ENCODE measurements at regions of chr12 and their contacts with region 1.

Region 1: DNA sequence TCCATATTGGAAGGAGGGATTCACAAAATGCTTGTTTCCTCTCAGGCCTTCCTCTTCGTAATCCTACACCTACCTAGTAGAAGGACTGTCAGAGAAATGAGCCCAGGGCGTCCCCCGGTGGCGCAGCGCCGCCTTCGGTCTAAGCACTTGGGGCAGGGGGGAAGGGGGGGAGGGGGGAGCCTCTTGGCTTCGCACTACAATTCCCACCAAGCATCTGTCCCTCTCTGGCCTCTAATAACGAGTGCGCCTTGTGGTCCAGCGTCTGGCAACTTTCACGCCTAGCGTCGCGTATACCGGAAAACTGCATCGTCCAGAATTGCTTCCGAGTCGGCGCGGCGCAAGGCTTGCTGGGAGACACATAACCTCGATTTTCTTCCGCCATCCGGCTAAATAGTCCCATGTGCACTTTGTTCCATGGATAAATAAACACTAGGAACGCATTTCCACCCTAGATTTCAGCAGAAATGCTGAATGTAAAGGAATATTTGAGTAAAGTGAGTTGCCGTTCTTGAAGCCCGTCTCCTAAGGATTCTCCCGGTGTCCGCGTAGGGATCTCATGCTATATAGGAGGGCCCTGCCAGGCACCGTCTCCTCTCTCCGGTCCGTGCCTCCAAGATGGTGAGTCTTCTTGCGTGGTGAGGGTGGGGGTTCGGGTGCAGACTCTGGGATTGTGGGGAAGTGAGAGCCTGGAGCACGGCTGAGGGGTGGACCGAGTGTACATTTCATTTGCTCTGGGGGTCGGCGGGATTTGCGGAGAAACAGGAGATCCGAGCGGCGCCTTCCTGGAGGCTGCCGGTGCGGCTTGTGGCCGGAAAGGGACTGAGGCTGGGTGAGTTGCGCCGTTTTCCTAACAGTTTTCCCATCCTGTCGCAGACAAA is at the start of gene RPS26:
- DNase-seq: peak; percentile 97
- H3K4me3 Mint-ChIP-seq: peak within 1 kb of the TSS; percentile 100
- H3K27ac Mint-ChIP-seq: peak within 1 kb of the TSS; percentile 99
- H3K4me1 Mint-ChIP-seq: peaks cover 50% of the 10 kb centered on the region
- H3K27me3 Mint-ChIP-seq: no peaks in the 10 kb centered on the region
- total RNA-seq, gene RPS26: 40.5 and 46.3 TPM in 2 replicates

Region 2: DNA sequence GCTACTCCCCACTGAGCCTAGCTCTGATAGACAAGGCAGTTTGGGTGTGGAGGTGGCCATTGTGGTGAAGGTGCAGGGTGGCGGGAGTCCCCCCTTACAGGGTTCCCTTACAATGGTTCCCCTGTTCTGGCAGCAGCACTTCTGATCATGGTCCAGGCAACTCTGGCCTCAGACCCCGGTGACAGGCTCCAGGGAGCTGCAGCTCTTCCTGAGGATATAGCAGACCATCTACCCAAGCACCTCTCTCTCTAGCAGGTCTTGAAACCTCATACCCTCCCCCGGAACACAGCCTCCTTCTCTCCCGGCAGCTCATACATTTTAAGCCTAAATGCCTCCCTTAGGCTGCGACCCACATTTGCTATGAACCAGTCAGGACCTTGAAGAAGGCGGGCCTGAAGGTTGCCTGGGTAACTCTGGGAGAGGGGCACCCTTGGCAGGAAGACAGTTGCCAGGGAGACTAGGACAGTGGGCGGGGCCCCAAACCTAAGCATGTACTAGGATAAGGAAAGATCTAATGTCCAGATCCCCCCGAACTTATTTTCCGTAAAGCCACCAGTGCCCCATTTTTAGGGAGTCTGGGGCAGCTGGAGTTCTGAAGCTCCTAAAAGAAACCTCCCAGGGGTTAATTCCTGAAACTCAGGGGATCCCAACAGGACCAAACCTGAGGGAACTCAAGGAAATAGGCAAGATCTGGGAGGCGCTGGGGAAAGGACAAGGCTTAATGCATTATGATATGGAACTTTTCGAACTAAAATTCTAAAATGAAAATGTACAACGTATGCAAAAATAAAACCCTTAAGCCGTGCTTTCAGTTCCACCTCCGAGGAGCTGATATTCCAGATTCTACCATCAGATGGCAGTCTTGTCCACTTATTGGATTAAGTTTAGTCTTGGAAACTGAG is 303.4 kb before region 1 on chr12:
- intact Hi-C with region 1: loop called (anchors 2 kb)
- DNase-seq: peak; percentile 96
- H3K4me3 Mint-ChIP-seq: peak overlapping the region; percentile 88
- H3K27ac Mint-ChIP-seq: peak overlapping the region; percentile 85
- H3K4me1 Mint-ChIP-seq: peaks cover 31% of the 10 kb centered on the region
- H3K27me3 Mint-ChIP-seq: peaks cover 4% of the 10 kb centered on the region

Region 3: DNA sequence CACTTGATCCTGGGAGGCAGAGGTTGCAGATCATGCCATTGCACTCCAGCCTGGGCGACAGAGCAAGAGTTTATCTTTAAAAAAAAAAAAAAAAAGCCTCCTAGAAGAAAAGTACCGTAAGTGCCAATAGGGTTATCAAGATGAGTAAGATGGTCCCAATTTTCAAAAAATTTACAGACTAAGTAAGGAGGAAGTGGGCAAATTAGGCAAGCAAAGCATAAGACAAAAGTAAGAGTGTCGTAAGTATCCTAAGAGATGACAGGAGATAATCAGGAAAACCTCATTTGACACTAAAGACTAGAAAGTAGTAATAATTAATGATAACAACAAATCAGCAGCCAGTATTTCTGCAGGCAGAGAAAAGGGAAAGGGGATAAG is 126.3 kb before region 1 on chr12:
- intact Hi-C with region 1: no loop called
- DNase-seq: no peak
- H3K4me3 Mint-ChIP-seq: peak overlapping the region; percentile 0
- H3K27ac Mint-ChIP-seq: peak overlapping the region; percentile 6
- H3K4me1 Mint-ChIP-seq: peaks cover 19% of the 10 kb centered on the region
- H3K27me3 Mint-ChIP-seq: no peaks in the 10 kb centered on the region

Region 4: GRCh38 chr12:55973598-55974307 is 68.0 kb before region 1 on chr12 and contains the start of gene RAB5B:
- intact Hi-C with region 1: loop called (anchors 1 kb)
- DNase-seq: peak; percentile 99
- H3K4me3 Mint-ChIP-seq: no peak within 1 kb of the TSS
- H3K27ac Mint-ChIP-seq: no peak within 1 kb of the TSS
- H3K4me1 Mint-ChIP-seq: peaks cover 28% of the 10 kb centered on the region
- H3K27me3 Mint-ChIP-seq: no peaks in the 10 kb centered on the region
- total RNA-seq, gene RAB5B: 39.0 and 40.2 TPM in 2 replicates

Region 5: GRCh38 chr12:56020423-56021184 is 21.2 kb before region 1 on chr12 and contains the start of gene IKZF4:
- intact Hi-C with region 1: loop called (anchors 2 kb)
- DNase-seq: peak; percentile 77
- H3K4me3 Mint-ChIP-seq: peak within 1 kb of the TSS; percentile 100
- H3K27ac Mint-ChIP-seq: peak within 1 kb of the TSS; percentile 99
- H3K4me1 Mint-ChIP-seq: peaks cover 47% of the 10 kb centered on the region
- H3K27me3 Mint-ChIP-seq: no peaks in the 10 kb centered on the region
- total RNA-seq, gene IKZF4: 24.3 and 26.1 TPM in 2 replicates

Region 6: DNA sequence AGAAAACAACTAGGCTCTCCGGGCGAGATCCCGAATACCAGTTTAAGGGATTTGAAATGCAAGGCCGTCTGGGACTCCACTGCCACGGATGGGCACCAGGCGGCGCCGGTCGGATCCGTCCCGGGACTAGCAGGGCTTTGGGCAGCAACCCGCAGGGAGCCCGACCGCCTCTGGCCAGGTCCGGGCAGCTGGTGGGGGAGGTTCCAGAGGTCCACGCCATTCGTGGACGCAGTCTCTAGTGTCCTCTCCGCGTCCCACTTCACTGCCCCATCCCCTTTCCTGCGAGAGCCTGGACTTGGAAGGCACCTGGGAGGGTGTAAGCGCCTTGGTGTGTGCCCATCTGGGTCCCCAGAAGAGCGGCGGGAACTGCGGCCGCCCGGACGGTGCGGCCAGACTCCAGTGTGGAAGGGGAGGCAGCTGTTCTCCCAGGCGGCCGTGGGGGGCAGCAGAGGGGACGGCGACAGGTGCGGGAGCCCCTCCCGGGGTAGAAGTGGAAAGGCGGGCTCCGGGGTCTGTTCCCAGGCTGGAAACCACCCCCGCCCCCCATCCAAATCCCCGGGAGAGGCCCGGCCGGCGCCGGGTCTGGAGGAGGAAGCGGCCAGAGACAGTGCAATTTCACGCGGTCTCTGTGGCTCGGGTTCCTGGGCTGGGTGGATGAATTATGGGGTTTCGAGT is 37.3 kb after region 1 on chr12:
- intact Hi-C with region 1: loop called (anchors 5 kb)
- DNase-seq: peak; percentile 85
- H3K4me3 Mint-ChIP-seq: peak overlapping the region; percentile 88
- H3K27ac Mint-ChIP-seq: no peak overlapping the region
- H3K4me1 Mint-ChIP-seq: peaks cover 2% of the 10 kb centered on the region
- H3K27me3 Mint-ChIP-seq: peaks cover 25% of the 10 kb centered on the region

Region 7: DNA sequence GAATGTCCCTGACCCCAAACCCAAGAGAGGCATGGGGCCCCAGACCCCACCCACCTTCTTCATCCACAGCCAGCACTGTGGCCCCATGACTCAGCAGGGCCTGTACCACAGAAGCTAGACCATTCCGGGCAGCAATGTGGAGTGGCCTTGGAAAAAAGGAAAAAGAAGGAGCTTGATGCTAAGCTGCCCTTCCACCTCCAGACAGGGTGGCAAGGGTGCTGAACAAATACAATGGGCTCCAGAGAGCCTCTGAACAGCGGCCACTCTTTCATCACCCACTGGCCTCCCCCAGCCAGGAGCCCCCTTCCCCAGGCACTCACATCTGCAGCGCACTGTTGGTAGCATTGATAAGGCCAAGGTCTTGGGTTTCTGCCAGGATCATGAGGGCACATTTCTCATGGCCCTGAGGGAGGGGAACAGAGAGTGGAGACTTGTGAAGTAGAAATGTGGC is 202.0 kb after region 1 on chr12:
- intact Hi-C with region 1: no loop called
- DNase-seq: no peak
- H3K4me3 Mint-ChIP-seq: no peak overlapping the region
- H3K27ac Mint-ChIP-seq: no peak overlapping the region
- H3K4me1 Mint-ChIP-seq: peaks cover 5% of the 10 kb centered on the region
- H3K27me3 Mint-ChIP-seq: no peaks in the 10 kb centered on the region

Measured in activated CD4-positive, alpha-beta T cell treated with anti-CD3 and anti-CD28 coated beads, Interleukin-2, amount 10 ng/mL, durations not matched to agents 24 days and 14 days (primary cell).